Activated B cell treated with CpG ODN at 0.5 μM for 24 hours (primary cell): ENCODE measurements at regions of chr22 and their contacts with region 1.

Region 1: DNA sequence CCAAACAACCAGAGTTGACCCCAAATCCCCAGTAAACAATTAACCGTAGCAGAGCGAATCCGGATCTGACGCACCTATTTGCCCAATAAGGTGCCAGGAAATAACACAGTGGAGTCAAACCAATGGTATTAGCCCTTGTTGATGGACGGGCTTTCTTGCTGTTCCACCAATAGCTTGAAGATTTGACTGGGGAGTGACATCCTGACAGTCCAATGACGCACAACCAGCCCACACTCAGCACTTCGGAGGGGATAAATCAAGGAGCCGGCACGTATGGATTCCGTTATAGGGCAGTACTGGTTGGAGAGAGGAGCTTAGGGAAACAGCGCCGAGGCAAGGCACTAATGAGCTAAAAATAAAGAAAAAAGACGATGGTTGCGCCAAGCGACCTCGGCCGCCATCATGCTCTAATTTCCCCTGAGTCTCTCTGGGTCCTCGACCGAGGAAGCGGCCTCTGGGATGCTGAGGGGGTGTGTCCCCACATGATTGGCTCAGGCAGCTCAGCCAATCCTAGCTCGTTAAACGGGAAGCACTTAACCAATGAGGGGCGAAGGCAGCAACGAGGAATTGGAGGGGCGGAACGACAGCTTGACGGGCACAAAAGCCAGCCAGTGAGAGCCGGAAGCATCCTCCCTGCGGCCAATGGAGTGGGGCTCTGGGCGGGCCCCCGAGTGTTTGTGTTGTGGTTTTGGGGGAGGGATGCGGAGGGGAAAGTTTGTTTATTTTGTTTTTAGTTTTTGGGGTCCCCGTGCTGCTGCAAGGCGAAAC is 49.5 kb downstream of the FAM83F start:
- DNase-seq: peak; percentile 94
- ATAC-seq: peak; percentile 85
- H3K4me3 Mint-ChIP-seq: peak overlapping the region; percentile 90
- H3K27ac Mint-ChIP-seq: peak overlapping the region; percentile 99
- H3K4me1 Mint-ChIP-seq: peaks cover 48% of the 10 kb centered on the region
- H3K27me3 Mint-ChIP-seq: peaks cover 12% of the 10 kb centered on the region
- CTCF ChIP-seq: no peak

Region 2: GRCh38 chr22:39349506-39349966 is 694.8 kb before region 1 on chr22:
- CTCF ChIA-PET with region 1: no interaction called
- POLR2A ChIA-PET with region 1: interaction called, 6 read pairs
- intact Hi-C with region 1: loop called (anchors 1 kb)
- DNase-seq: peak; percentile 47
- ATAC-seq: peak; percentile 9
- H3K4me3 Mint-ChIP-seq: peak overlapping the region; percentile 87
- H3K27ac Mint-ChIP-seq: peak overlapping the region; percentile 87
- H3K4me1 Mint-ChIP-seq: peaks cover 40% of the 10 kb centered on the region
- H3K27me3 Mint-ChIP-seq: peaks cover 2% of the 10 kb centered on the region
- CTCF ChIP-seq: no peak

Region 3: GRCh38 chr22:39820256-39820655 is 224.0 kb before region 1 on chr22:
- CTCF ChIA-PET with region 1: no interaction called
- POLR2A ChIA-PET with region 1: no interaction called
- intact Hi-C with region 1: no loop called
- DNase-seq: no peak
- ATAC-seq: no peak
- H3K4me3 Mint-ChIP-seq: no peak overlapping the region
- H3K27ac Mint-ChIP-seq: no peak overlapping the region
- H3K4me1 Mint-ChIP-seq: peaks cover 30% of the 10 kb centered on the region
- H3K27me3 Mint-ChIP-seq: no peaks in the 10 kb centered on the region
- CTCF ChIP-seq: no peak

Region 4: GRCh38 chr22:39900306-39901227 is 143.7 kb before region 1 on chr22 and contains the start of gene GRAP2:
- CTCF ChIA-PET with region 1: no interaction called
- POLR2A ChIA-PET with region 1: interaction called, 4 read pairs
- intact Hi-C with region 1: loop called (anchors 1 kb)
- DNase-seq: no peak
- ATAC-seq: peak; percentile 57
- H3K4me3 Mint-ChIP-seq: peak within 1 kb of the TSS; percentile 75
- H3K27ac Mint-ChIP-seq: peak within 1 kb of the TSS; percentile 90
- H3K4me1 Mint-ChIP-seq: peaks cover 54% of the 10 kb centered on the region
- H3K27me3 Mint-ChIP-seq: no peaks in the 10 kb centered on the region
- CTCF ChIP-seq: no peak
- total RNA-seq, gene GRAP2: 4.2 and 4.3 TPM in 2 replicates

Region 5: GRCh38 chr22:40084246-40084645 is 40.0 kb after region 1 on chr22:
- CTCF ChIA-PET with region 1: no interaction called
- POLR2A ChIA-PET with region 1: interaction called, 14 read pairs
- intact Hi-C with region 1: no loop called
- DNase-seq: no peak
- ATAC-seq: no peak
- H3K4me3 Mint-ChIP-seq: no peak overlapping the region
- H3K27ac Mint-ChIP-seq: no peak overlapping the region
- H3K4me1 Mint-ChIP-seq: peaks cover 38% of the 10 kb centered on the region
- H3K27me3 Mint-ChIP-seq: no peaks in the 10 kb centered on the region
- CTCF ChIP-seq: no peak

Region 6: GRCh38 chr22:40276996-40277823 is 232.9 kb after region 1 on chr22:
- CTCF ChIA-PET with region 1: no interaction called
- POLR2A ChIA-PET with region 1: interaction called, 9 read pairs
- intact Hi-C with region 1: loop called (anchors 10 kb)
- DNase-seq: no peak
- ATAC-seq: no peak
- H3K4me3 Mint-ChIP-seq: no peak overlapping the region
- H3K27ac Mint-ChIP-seq: peak overlapping the region; percentile 81
- H3K4me1 Mint-ChIP-seq: peaks cover 9% of the 10 kb centered on the region
- H3K27me3 Mint-ChIP-seq: no peaks in the 10 kb centered on the region
- CTCF ChIP-seq: no peak

Region 7: DNA sequence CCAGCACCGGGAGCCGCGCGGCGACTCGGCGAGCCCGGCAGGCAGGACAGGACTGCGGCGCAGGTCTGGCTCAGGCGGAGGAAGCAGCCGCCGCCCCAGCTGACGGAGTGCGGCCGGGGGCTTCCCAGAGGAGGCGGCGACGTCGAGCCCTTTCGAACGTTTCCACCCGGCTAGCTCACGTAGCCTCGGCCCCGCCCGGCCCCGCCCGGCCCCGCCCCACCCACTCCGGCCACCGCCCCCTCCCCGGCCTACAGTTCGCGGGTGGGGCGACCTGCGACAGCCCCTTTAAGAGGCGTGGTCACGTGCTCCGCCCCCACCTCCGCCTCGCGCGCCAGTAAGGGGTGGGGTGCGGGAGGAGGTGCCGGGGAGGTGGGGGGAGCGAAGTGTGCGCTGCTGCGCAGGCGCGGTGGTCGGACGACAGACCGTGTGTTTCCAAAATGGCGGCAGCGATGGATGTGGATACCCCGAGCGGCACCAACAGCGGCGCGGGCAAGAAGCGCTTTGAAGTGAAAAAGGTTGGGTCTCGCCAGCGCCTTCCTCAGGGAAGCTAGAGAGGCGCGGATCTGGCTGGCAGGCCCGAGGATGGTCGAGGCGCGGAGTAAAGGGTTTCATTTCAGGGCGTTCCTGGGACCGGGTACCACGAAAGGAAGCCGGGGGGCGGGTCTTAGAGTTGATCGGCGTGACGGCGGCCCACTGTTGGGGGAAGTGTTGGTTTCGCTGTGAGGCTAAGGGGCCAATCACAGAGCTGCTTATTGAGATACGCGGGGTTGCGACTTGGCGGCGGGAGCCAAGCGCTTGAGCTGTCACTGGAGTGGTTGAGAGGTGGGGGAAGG is 906.9 kb after region 1 on chr22 and contains the start of gene RBX1:
- CTCF ChIA-PET with region 1: no interaction called
- POLR2A ChIA-PET with region 1: interaction called, 11 read pairs
- intact Hi-C with region 1: no loop called
- DNase-seq: peak; percentile 96
- ATAC-seq: peak; percentile 83
- H3K4me3 Mint-ChIP-seq: peak within 1 kb of the TSS; percentile 100
- H3K27ac Mint-ChIP-seq: peak within 1 kb of the TSS; percentile 100
- H3K4me1 Mint-ChIP-seq: peaks cover 30% of the 10 kb centered on the region
- H3K27me3 Mint-ChIP-seq: no peaks in the 10 kb centered on the region
- CTCF ChIP-seq: no peak
- total RNA-seq, gene RBX1: 78.6 and 78.9 TPM in 2 replicates